IMR-90 (cell line): ENCODE measurements at regions of chr10 and their contacts with region 1.

Region 1: DNA sequence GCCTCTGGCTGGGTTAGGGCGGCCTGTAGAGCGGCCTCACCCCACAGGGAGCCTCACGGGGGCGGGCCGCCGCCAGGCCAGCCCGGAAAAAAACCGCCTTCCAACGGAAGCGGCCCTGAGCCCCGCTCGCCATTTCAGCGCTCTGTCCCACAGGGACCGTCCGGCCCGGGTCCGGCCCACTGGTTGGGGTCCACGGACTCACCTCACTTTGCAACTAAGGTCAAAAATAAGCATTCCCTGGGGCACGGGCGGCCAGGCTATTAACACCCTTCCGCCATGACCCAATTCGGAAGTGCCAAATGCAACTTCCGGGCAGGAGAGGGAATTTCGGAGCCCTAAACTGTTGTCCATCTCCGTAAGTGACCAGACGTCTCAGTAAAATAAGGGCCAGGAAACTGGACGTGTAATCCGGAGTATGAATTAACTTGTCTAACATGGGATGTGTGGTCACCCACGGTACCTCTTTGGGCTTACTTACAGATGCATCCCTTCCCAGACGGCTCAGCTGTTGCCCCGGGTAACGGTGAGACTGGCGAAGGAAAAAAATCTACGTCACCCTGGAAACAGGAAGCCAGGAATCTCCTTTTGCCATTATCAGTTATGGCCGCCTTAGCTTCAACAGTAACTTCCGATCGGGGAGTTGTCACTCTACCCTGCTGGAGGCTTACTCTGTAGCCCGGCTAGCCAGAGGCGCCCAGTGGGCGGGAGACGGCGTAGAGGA is at the start of gene BBIP1:
- DNase-seq: peak; percentile 100
- ATAC-seq: peak; percentile 88
- H3K4me3 ChIP-seq: peak within 1 kb of the TSS; percentile 76
- H3K27ac ChIP-seq: peak within 1 kb of the TSS; percentile 93
- H3K4me1 ChIP-seq: peaks cover 8% of the 10 kb centered on the region; the same call in 1 of the 2 replicates
- H3K27me3 ChIP-seq: no peaks in the 10 kb centered on the region
- CTCF ChIP-seq: no peak
- POLR2A ChIP-seq: peak; percentile 97
- RAD21 ChIP-seq: no peak
- total RNA-seq, gene BBIP1: 17.4 and 21.7 TPM in 2 replicates

Region 2: DNA sequence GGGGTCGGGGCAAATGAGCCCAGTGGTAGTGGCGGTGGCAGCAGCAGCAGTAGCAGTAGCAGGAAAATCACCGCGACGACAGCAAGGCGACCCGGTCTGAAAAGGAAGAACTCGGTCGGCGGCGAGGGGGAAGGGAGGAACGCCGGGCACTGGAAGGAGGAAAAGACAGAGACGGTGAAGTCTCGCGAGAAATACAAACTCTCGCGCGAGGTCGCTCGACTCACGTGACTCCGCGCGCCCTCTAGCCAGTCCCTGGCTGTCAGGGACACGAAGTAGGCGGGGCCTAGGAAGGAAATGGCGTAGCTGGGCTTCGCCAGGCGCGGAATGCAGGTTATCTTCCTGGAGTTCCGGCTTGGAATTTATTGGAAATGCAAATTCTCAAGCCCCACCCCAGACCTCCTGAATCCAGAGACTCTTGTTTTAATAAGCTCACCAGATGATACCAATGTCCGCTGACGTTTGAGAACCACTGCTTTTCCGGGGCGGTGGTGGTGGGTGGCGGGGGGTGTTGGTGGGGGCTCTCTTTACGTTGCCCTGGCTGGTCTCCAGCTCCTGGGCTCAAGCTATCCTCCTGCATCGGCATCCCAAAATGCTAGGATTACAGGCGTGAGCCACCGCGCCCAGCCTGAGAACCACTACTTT is 613.9 kb before region 1 on chr10 and contains the start of gene SMNDC1:
- CTCF ChIA-PET with region 1: no interaction called
- POLR2A ChIA-PET with region 1: no interaction called
- dilution Hi-C with region 1: no loop called
- in situ Hi-C with region 1: no loop called
- intact Hi-C with region 1: loop called (anchors 10 kb)
- DNase-seq: peak; percentile 97
- ATAC-seq: peak; percentile 92
- H3K4me3 ChIP-seq: peak within 1 kb of the TSS; percentile 90
- H3K27ac ChIP-seq: peak within 1 kb of the TSS; percentile 76
- H3K4me1 ChIP-seq: peaks cover 4% of the 10 kb centered on the region; the same call in 1 of the 2 replicates
- H3K27me3 ChIP-seq: no peaks in the 10 kb centered on the region
- CTCF ChIP-seq: no peak
- POLR2A ChIP-seq: peak; percentile 81; the same call in 1 of the 2 replicates
- RAD21 ChIP-seq: no peak
- total RNA-seq, gene SMNDC1: 3.9 and 8.6 TPM in 2 replicates

Region 3: GRCh38 chr10:110803830-110804338 is 114.9 kb before region 1 on chr10:
- CTCF ChIA-PET with region 1: interaction called, 5 read pairs
- POLR2A ChIA-PET with region 1: interaction called, 9 read pairs
- dilution Hi-C with region 1: no loop called
- in situ Hi-C with region 1: no loop called
- intact Hi-C with region 1: loop called (anchors 2 kb)
- DNase-seq: peak; percentile 24
- ATAC-seq: peak; percentile 70
- H3K4me3 ChIP-seq: no peak overlapping the region
- H3K27ac ChIP-seq: no peak overlapping the region
- H3K4me1 ChIP-seq: peaks cover 7% of the 10 kb centered on the region; the same call in 1 of the 2 replicates
- H3K27me3 ChIP-seq: peaks cover 5% of the 10 kb centered on the region
- CTCF ChIP-seq: peak; percentile 49
- POLR2A ChIP-seq: no peak
- RAD21 ChIP-seq: peak; percentile 53

Region 4: DNA sequence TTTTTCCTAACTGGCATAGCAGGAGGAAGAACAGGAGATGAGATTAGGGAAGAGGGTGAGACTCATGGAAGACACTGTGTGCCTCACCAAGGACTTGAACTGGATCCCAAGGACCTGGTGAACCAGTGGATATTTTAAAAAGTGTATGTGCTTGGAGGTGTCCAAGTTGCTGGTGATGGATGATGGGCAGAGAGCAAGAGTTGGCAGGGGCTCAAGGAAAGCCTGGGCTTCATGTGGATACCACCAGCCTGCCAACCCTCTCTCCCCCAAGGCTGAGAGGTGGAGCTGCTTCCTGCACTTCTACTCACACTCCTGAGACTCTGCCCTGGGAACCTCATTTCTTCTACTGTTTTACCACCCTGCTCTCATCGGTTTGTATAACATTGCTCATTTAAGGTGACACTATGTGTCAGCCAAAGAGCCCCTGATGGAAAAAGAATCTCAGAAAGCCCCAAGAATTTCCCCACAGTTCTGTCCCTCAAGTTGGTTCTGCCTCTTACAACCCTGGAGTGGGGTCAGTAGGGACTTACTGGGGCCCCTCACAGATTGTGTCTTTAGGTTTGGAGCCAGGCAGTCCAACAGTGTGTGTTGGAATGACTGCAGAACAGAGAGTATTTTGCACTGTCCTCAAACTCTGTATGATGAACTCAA is 103.3 kb before region 1 on chr10:
- CTCF ChIA-PET with region 1: no interaction called
- POLR2A ChIA-PET with region 1: no interaction called
- dilution Hi-C with region 1: no loop called
- in situ Hi-C with region 1: no loop called
- intact Hi-C with region 1: no loop called
- DNase-seq: no peak
- ATAC-seq: no peak
- H3K4me3 ChIP-seq: no peak overlapping the region
- H3K27ac ChIP-seq: no peak overlapping the region
- H3K4me1 ChIP-seq: no peaks in the 10 kb centered on the region; the same call in 1 of the 2 replicates
- H3K27me3 ChIP-seq: peaks cover 9% of the 10 kb centered on the region
- CTCF ChIP-seq: no peak
- POLR2A ChIP-seq: no peak
- RAD21 ChIP-seq: no peak

Region 5: DNA sequence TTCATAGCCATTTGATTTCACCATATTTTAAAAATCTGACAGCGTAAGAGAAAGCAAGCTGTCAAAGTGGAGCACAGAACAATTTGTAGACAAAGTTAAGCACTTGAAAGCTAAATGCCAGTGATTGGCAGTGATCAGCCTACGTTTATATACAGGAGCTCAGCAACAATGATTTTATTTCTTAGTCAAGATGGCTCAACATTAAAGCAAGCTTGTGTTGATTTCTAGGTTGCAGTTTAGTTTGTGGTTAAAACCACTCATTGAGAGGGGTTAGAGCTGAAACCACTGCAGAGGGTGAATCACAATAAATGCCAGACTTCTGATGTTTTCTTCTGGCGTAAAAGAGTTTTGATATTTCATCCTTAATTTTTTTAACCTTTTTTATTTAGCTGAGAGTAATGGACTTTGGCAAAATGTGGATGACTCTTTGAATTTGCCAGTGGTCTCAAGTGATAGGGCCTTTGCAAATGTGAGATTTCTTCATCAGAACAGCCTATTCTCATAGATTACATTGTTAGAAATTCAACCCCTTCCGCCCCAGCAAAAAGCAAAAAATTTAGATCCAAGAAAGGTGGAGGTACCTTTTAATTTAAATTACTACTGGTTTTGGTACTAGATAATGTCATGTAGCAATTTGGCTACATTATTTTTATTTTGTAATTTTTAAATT is 74.4 kb after region 1 on chr10:
- CTCF ChIA-PET with region 1: no interaction called
- POLR2A ChIA-PET with region 1: no interaction called
- dilution Hi-C with region 1: no loop called
- in situ Hi-C with region 1: no loop called
- intact Hi-C with region 1: loop called (anchors 5 kb)
- DNase-seq: peak; percentile 91
- ATAC-seq: peak; percentile 92
- H3K4me3 ChIP-seq: no peak overlapping the region
- H3K27ac ChIP-seq: no peak overlapping the region
- H3K4me1 ChIP-seq: peaks cover 1% of the 10 kb centered on the region; the same call in 1 of the 2 replicates
- H3K27me3 ChIP-seq: no peaks in the 10 kb centered on the region
- CTCF ChIP-seq: no peak
- POLR2A ChIP-seq: no peak
- RAD21 ChIP-seq: no peak

Region 6: DNA sequence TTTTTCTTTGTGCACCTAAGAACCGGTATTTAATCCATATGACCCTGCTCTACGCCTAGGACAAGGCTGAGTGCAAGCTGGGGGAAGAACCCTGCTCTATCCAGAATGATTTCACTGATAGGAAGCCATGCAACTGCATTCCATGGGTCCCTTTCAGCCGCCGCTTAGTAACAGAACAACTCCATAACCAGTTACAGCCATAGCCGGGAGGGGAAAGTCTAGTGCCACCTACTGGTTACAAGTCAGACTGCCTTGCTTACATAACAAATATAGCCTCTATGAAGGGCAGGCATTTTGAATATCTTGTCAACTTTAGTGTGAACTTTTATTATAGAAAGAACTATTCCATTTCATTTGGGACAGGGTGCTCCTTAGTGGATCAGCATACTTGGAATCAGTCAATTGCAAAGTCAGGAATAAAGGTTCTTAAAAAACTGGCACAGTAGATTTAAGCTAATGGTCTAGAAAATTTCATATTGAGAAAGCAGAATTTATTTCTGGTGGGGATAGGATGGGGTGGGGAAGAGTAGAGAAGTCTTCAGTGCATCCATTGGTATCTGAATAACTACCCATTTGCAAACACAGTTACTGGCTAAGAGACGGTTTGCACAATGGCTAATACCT is 679.7 kb after region 1 on chr10:
- CTCF ChIA-PET with region 1: no interaction called
- POLR2A ChIA-PET with region 1: no interaction called
- dilution Hi-C with region 1: no loop called
- in situ Hi-C with region 1: no loop called
- intact Hi-C with region 1: loop called (anchors 10 kb)
- DNase-seq: peak; percentile 31
- ATAC-seq: peak; percentile 69
- H3K4me3 ChIP-seq: no peak overlapping the region
- H3K27ac ChIP-seq: no peak overlapping the region
- H3K4me1 ChIP-seq: no peaks in the 10 kb centered on the region
- H3K27me3 ChIP-seq: no peaks in the 10 kb centered on the region
- CTCF ChIP-seq: peak; percentile 47
- POLR2A ChIP-seq: no peak
- RAD21 ChIP-seq: peak; percentile 40